Breast epithelium (tissue), 4 donors: ENCODE measurements at regions of chr20 and their contacts with region 1.

Region 1: DNA sequence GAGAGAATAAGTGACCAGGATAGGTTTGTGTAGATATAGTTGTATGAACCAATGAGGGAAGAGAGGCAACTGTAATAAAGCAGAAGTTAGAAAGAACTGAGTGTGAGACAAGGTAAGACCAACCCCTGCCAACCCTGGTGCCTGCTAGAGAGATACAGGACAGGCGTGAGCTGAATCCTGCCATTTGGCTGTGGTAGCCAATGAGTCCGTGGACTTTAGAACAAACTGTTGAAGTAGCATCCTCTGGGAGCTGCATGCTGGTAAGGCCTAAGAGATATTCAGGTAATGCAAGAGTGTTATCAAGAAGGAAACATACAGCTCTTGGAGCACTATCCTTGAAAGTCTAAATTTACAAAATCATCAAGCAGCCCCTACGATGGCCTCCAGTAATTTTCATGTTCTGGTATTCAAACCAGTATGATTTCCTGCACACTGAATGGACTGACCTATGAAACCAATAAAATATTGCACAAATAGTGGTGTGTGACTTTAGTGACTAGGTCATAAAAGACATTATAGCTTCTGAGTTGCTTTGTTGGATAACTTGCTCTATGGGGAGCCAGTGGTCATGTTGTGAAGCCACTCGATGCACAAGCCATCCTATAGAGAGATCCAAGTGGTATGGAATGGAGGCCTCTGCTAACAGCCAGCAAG is 24.0 kb downstream of the BTBD3 start:
- DNase-seq: no peak
- H3K4me3 ChIP-seq: no peak overlapping the region
- H3K27ac ChIP-seq: no peak overlapping the region
- H3K4me1 ChIP-seq: no peaks in the 10 kb centered on the region
- H3K27me3 ChIP-seq: no peaks in the 10 kb centered on the region
- CTCF ChIP-seq: no peak
- POLR2A ChIP-seq: no peak

Region 2: DNA sequence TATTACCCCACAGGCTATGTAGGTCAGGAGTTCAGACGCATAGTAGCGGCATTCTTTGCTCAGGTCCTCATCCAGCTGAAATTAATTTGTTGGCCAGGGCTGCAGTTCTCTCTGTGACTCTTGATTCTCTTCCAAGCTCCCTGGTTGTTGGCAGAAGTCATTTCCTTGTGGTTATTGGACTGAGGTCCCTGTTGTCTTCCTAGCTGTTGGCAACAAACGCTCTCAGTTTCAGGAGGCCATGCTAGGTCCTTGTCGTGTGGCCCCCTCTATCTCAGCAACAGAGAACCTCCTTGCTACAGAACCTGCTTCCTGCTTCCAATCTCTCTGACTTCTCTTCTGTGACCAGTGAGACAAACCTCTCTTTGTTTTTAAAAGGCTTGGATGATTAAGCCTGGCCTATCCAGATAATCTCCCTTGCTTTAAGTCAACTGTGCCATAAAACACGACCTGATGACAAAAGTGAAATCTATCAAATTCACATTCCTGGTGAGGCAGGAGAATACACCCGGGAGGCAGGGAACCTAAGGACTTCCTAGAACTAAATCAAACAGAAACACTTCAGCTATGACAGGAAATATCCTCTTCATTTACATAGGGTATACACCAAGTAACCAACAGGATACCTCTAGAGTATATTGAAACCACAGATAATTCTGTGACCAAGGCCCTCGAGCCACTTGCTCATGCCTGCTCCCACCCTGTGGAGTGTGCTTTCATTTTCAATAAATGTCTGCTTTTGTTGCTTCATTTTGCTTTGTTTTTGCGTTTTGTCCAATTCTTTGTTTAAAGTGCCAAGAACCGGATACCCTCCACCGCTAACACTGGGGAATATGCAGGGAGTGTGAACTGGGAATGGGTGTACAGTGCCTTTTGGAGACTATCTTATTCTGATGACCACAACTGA is 172.0 kb after region 1 on chr20:
- intact Hi-C with region 1: loop called (anchors 5 kb)
- DNase-seq: peak in 1 of 2 donors; percentile 89
- H3K4me3 ChIP-seq: no peak overlapping the region
- H3K27ac ChIP-seq: peak overlapping the region; percentile 72 to 83
- H3K4me1 ChIP-seq: peaks cover 0 to 8% of the 10 kb centered on the region in 2 donors
- H3K27me3 ChIP-seq: no peaks in the 10 kb centered on the region
- CTCF ChIP-seq: no peak
- POLR2A ChIP-seq: no peak